MCF 10A (cell line): ENCODE measurements at regions of chr4 and their contacts with region 1.

Region 1: DNA sequence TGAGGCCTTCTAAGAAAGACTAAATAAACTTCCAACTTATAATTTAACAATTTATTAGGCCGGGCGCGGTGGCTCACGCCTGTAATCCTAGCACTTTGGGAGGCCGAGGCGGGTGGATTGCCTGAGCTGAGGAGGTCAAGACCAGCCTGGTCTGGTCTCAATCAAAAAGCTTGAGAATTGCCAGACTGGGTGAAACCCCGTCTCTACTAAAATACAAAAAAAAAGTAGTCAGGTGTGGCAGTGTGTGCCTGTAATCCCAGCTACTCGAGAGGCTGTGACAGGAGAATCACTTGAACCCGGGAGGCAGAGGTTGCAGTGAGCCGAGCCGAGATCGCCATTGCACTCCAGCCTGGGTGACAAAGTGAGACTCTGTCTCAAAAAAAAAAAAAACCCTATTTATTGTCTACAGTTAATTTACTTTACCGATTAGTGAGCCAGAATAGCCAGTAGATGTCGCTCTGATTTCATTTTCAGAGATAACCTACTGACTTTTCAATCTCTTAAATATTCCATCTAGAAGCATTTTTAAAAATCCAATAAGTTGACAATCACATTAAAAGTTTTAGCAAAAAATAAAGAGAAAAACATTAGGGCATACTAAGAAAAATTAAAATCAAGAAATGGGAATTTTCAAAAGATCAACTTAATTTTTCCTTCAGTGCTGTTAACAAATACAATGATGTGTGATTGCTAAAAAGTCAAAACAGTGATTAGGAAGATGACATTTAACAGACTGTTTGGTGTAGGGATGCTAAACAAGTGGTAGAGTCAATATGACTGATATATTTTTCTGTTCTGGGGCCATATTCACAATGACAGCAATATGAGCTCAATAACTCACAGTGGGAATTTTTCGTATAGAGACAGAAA is 4.3 kb upstream of the SHROOM3 start:
- DNase-seq: peak; percentile 66
- H3K4me3 Mint-ChIP-seq: no peak overlapping the region
- H3K27ac Mint-ChIP-seq: no peak overlapping the region
- H3K4me1 Mint-ChIP-seq: peaks cover 19% of the 10 kb centered on the region
- H3K27me3 Mint-ChIP-seq: no peaks in the 10 kb centered on the region
- CTCF ChIP-seq: peak; percentile 75

Region 2: GRCh38 chr4:76179398-76180318 is 251.1 kb before region 1 on chr4:
- CTCF ChIA-PET with region 1: interaction called, 44 read pairs
- POLR2A ChIA-PET with region 1: interaction called, 9 read pairs
- intact Hi-C with region 1: loop called (anchors 1 kb)
- DNase-seq: peak; percentile 87
- H3K4me3 Mint-ChIP-seq: no peak overlapping the region
- H3K27ac Mint-ChIP-seq: no peak overlapping the region
- H3K4me1 Mint-ChIP-seq: peaks cover 8% of the 10 kb centered on the region
- H3K27me3 Mint-ChIP-seq: no peaks in the 10 kb centered on the region
- CTCF ChIP-seq: peak; percentile 94

Region 3: DNA sequence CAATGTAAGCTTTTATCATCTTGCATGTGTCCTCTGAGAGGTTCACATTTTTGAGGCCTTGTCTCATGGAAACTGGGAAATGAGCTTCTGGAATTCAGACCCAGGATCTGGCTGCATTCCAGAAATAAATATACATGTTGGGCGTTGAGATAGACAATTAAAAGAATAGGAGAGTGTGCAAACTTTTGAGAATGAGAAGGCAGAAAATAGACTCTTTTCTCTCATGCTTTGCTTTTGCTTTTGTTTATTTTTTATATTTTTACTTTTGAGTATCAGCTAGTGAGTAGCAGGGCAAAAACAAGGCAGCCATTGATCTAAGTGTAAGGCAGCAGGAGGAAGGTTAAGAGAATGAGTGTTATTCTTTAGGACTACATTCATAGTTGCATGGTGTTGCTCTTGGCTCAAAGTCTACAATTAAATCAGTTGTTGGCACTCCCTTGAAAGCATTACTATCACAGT is 16.7 kb after region 1 on chr4:
- CTCF ChIA-PET with region 1: interaction called, 7 read pairs
- POLR2A ChIA-PET with region 1: interaction called, 12 read pairs
- intact Hi-C with region 1: no loop called
- DNase-seq: no peak
- H3K4me3 Mint-ChIP-seq: no peak overlapping the region
- H3K27ac Mint-ChIP-seq: peak overlapping the region; percentile 48
- H3K4me1 Mint-ChIP-seq: peaks cover 31% of the 10 kb centered on the region
- H3K27me3 Mint-ChIP-seq: no peaks in the 10 kb centered on the region
- CTCF ChIP-seq: no peak

Region 4: GRCh38 chr4:76499461-76499860 is 68.7 kb after region 1 on chr4:
- CTCF ChIA-PET with region 1: interaction called, 294 read pairs
- POLR2A ChIA-PET with region 1: interaction called, 76 read pairs
- intact Hi-C with region 1: no loop called
- DNase-seq: no peak
- H3K4me3 Mint-ChIP-seq: no peak overlapping the region
- H3K27ac Mint-ChIP-seq: no peak overlapping the region
- H3K4me1 Mint-ChIP-seq: no peaks in the 10 kb centered on the region
- H3K27me3 Mint-ChIP-seq: no peaks in the 10 kb centered on the region
- CTCF ChIP-seq: no peak

Region 5: GRCh38 chr4:76515975-76516843 is 85.5 kb after region 1 on chr4:
- CTCF ChIA-PET with region 1: interaction called, 19 read pairs
- POLR2A ChIA-PET with region 1: no interaction called
- intact Hi-C with region 1: no loop called
- DNase-seq: no peak
- H3K4me3 Mint-ChIP-seq: no peak overlapping the region
- H3K27ac Mint-ChIP-seq: no peak overlapping the region
- H3K4me1 Mint-ChIP-seq: peaks cover 4% of the 10 kb centered on the region
- H3K27me3 Mint-ChIP-seq: no peaks in the 10 kb centered on the region
- CTCF ChIP-seq: no peak

Region 6: GRCh38 chr4:76758290-76758882 is 327.6 kb after region 1 on chr4:
- CTCF ChIA-PET with region 1: interaction called, 13 read pairs
- POLR2A ChIA-PET with region 1: interaction called, 3 read pairs
- intact Hi-C with region 1: no loop called
- DNase-seq: peak; percentile 80
- H3K4me3 Mint-ChIP-seq: no peak overlapping the region
- H3K27ac Mint-ChIP-seq: no peak overlapping the region
- H3K4me1 Mint-ChIP-seq: peaks cover 8% of the 10 kb centered on the region
- H3K27me3 Mint-ChIP-seq: no peaks in the 10 kb centered on the region
- CTCF ChIP-seq: peak; percentile 52